ENCODE measurements at regions of chr10 and their contacts with region 1.

Region 1: DNA sequence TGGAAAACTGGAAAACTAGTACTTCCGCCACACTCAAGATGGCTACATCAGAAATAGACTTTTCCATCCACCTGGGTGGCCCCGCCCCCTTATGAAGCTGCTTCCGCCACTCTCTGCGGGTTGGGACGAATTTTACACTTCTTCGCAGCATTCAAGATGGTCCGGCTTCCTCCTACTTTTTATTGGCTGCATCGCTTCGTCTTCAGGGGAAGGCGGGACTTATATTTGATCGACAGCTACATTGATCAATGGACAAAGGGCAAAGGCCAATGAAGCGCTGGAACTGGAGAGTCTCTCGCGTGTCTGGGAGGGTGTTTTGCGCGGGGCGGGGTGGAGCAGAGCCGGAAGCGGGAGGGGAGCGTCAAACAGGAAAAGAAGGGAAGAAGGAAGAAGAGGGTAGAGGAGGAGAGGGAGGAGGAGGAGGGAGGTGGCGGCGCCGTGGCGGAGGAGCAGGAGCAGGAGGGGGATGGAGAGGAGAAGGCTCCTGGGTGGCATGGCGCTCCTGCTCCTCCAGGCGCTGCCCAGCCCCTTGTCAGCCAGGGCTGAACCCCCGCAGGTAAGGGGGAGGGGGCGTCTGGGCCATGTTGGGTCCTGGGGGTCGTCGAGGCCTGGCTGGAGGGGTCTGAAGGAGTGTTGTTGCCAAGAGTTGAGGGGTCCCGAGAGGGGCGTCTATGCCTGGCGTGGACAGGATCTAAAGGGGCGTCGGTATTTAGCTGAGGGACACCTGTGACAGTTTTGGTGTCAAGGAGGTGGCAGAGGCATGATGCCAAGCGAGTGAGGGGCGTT is at the start of gene WBP1L:
- DNase-seq: peak; percentile 96 to 98 (median 97)
- ATAC-seq: peak; percentile 96 to 98
- H3K4me3 ChIP-seq: peak within 1 kb of the TSS; percentile 84
- H3K27ac ChIP-seq: peak within 1 kb of the TSS; percentile 94
- H3K4me1 ChIP-seq: peaks cover 4% of the 10 kb centered on the region
- H3K27me3 ChIP-seq: no peaks in the 10 kb centered on the region
- total RNA-seq, gene WBP1L: 35.2 to 50.5 (median 37.8) TPM

Region 2: DNA sequence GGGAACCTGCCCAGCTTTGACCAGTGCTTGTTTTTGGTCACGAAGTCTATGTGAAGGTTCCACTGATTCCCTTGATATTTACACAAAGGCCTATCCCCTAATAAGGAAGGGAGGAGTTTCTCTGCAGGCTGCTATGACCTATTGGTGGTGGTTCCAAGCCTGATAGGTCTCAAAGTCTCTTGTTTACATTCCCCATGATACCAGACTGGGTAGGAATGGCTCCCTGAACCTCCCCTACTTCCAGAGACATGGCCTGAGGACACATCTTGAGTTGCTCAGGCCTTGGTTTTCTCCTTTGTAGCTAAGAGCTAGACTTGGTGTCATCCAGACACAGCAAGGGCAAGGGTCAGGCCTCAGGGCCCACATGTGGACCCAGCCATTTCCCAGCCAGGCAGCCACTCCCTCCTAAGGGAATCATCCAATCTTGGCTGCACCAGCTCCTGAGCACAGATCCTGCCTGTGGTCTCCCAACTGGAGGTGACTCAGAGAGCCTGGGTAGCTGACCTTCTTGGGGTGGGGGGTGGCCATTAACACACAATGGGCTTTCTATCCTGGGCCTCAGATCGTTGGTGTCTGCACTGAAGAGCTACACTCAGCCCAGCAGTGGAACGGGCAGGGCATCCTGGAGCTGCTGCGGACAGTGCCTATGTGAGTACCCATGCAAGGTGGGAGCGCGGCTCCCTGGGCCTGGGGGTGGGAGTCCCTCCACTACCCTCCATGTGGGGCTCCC is 150.5 kb before region 1 on chr10:
- intact Hi-C with region 1: no loop called
- DNase-seq: no peak
- ATAC-seq: no peak
- H3K4me3 ChIP-seq: no peak overlapping the region
- H3K27ac ChIP-seq: no peak overlapping the region
- H3K4me1 ChIP-seq: peaks cover 2% of the 10 kb centered on the region
- H3K27me3 ChIP-seq: no peaks in the 10 kb centered on the region

Region 3: DNA sequence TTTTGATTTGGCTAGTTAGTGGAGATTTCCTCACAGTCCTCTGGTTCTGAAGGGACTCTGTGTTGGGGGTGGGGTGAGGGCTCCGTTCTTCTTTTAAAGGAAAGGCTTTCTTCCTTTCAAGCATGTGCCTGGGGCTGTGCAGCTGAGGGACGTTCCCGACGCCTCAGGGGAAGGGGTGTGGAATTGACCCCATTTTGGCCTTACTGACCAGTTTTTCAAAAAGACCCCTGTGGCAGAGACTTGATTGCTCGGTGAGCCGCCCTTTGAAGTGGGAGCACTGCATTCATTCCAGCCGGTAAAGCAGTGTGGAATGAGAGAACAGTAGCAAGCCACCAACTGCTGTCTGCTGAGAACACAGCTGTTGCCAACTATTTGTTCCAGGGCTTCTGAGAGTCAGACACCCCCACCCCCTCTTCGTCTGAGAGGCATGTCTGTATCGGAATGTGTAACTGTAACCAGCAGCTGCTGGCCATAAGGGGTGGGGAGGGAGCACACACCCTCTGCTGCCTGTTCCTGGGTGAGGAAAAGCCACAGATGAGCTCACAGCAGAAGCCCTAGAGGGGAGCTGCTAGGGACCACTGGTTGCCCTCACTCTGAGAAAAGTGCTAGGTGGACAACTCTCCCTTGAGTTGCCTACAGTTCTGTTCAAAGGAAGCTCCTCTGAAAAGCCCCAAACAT is 33.1 kb after region 1 on chr10:
- intact Hi-C with region 1: loop called in 1 of 4 experiments (anchors 5 kb)
- DNase-seq: peak; percentile 87 to 93 (median 87)
- ATAC-seq: peak; percentile 80 to 85
- H3K4me3 ChIP-seq: peak overlapping the region; percentile 81
- H3K27ac ChIP-seq: peak overlapping the region; percentile 97
- H3K4me1 ChIP-seq: peaks cover 49% of the 10 kb centered on the region
- H3K27me3 ChIP-seq: no peaks in the 10 kb centered on the region

Region 4: GRCh38 chr10:102815790-102816549 is 72.2 kb after region 1 on chr10:
- intact Hi-C with region 1: loop called in 1 of 4 experiments (anchors 10 kb)
- DNase-seq: peak; percentile 56 to 76 (median 74)
- ATAC-seq: peak; percentile 74 to 77
- H3K4me3 ChIP-seq: no peak overlapping the region
- H3K27ac ChIP-seq: peak overlapping the region; percentile 100
- H3K4me1 ChIP-seq: peaks cover 26% of the 10 kb centered on the region
- H3K27me3 ChIP-seq: no peaks in the 10 kb centered on the region